ENCODE measurements at regions of chr13 and their contacts with region 1.

Region 1: DNA sequence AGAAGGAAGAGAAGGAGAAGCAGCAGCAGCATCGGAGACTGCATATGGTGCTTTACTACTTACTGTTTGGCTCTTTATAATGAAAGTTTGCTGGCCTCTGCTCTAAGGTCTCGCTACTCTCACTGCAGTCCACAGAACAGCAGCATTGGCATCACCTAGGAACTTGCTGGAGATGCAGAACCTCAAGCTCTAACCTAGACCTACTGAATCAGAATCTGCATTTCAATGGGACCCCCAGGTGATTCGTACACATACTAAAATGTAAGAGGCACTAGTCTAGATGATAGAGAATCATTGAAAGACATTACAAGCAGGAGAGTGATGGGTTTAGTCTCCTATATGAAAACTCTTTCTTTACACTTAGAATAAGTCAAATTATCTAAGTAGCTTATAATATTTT is 270.6 kb downstream of the KLF5 start:
- DNase-seq: no peak
- H3K4me3 Mint-ChIP-seq: no peak overlapping the region
- H3K27ac Mint-ChIP-seq: no peak overlapping the region
- H3K4me1 Mint-ChIP-seq: peaks cover 1% of the 10 kb centered on the region
- H3K27me3 Mint-ChIP-seq: no peaks in the 10 kb centered on the region

Region 2: GRCh38 chr13:73792796-73793195 is 463.4 kb after region 1 on chr13:
- CTCF ChIA-PET with region 1: no interaction called
- intact Hi-C with region 1: no loop called
- DNase-seq: no peak
- H3K4me3 Mint-ChIP-seq: no peak overlapping the region
- H3K27ac Mint-ChIP-seq: no peak overlapping the region
- H3K4me1 Mint-ChIP-seq: peaks cover 39% of the 10 kb centered on the region
- H3K27me3 Mint-ChIP-seq: no peaks in the 10 kb centered on the region

Region 3: DNA sequence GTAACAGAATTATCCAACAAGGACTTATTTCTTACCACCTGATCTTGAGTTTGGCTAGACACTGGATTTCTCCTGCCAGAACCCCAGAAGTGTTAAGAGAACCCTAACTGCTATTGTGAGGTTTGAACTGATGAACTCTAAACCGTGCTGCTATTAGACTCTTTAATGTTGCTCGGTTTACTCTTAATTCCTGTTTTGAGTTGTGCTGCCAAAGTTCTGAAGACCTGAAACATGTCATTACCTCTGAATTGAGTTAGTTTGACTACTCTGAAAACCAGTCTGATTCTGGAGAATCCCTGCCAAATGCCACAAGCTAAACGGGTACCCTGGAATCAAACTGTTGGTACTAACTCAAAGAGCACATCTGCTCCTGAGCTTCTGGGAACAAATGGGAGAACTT is 589.3 kb after region 1 on chr13:
- CTCF ChIA-PET with region 1: no interaction called
- intact Hi-C with region 1: loop called (anchors 2 kb)
- DNase-seq: no peak
- H3K4me3 Mint-ChIP-seq: no peak overlapping the region
- H3K27ac Mint-ChIP-seq: no peak overlapping the region
- H3K4me1 Mint-ChIP-seq: peaks cover 50% of the 10 kb centered on the region
- H3K27me3 Mint-ChIP-seq: no peaks in the 10 kb centered on the region